Transverse colon (tissue), 4 donors: ENCODE measurements at regions of chr10 and their contacts with region 1.

Region 1: GRCh38 chr10:29386342-29386999 is 97.6 kb downstream of the LYZL1 start:
- DNase-seq: no peak
- H3K4me3 ChIP-seq: no peak overlapping the region
- H3K27ac ChIP-seq: no peak overlapping the region
- H3K4me1 ChIP-seq: peaks cover 0 to 3% (median 0%) of the 10 kb centered on the region in 4 donors
- H3K27me3 ChIP-seq: no peaks in the 10 kb centered on the region
- CTCF ChIP-seq: peak; percentile 74 to 78 (median 75)
- EP300 ChIP-seq: no peak
- POLR2A ChIP-seq: no peak

Region 2: GRCh38 chr10:28910956-28911355 is 475.5 kb before region 1 on chr10:
- in situ Hi-C with region 1: no loop called
- intact Hi-C with region 1: no loop called
- DNase-seq: no peak
- H3K4me3 ChIP-seq: no peak overlapping the region
- H3K27ac ChIP-seq: no peak overlapping the region
- H3K4me1 ChIP-seq: no peaks in the 10 kb centered on the region
- H3K27me3 ChIP-seq: no peaks in the 10 kb centered on the region
- CTCF ChIP-seq: no peak
- EP300 ChIP-seq: no peak
- POLR2A ChIP-seq: no peak

Region 3: GRCh38 chr10:29446327-29446726 is 59.9 kb after region 1 on chr10:
- in situ Hi-C with region 1: loop called in 1 of 4 experiments (anchors 5 kb)
- intact Hi-C with region 1: loop called (anchors 5 kb)
- DNase-seq: no peak
- H3K4me3 ChIP-seq: no peak overlapping the region
- H3K27ac ChIP-seq: no peak overlapping the region
- H3K4me1 ChIP-seq: peaks cover 0 to 6% (median 2%) of the 10 kb centered on the region in 4 donors
- H3K27me3 ChIP-seq: no peaks in the 10 kb centered on the region
- CTCF ChIP-seq: no peak
- EP300 ChIP-seq: no peak
- POLR2A ChIP-seq: no peak